Activated CD4-positive, alpha-beta T cell treated with anti-CD3 and anti-CD28 coated beads, Interleukin-2, amount 10 ng/mL, durations not matched to agents 24 days and 14 days (primary cell): ENCODE measurements at regions of chr2 and their contacts with region 1.

Region 1: GRCh38 chr2:179751163-179751809 is 110.1 kb downstream of the ZNF385B start:
- DNase-seq: no peak
- H3K4me3 Mint-ChIP-seq: no peak overlapping the region
- H3K27ac Mint-ChIP-seq: no peak overlapping the region
- H3K4me1 Mint-ChIP-seq: no peaks in the 10 kb centered on the region
- H3K27me3 Mint-ChIP-seq: peaks cover 8% of the 10 kb centered on the region

Region 2: DNA sequence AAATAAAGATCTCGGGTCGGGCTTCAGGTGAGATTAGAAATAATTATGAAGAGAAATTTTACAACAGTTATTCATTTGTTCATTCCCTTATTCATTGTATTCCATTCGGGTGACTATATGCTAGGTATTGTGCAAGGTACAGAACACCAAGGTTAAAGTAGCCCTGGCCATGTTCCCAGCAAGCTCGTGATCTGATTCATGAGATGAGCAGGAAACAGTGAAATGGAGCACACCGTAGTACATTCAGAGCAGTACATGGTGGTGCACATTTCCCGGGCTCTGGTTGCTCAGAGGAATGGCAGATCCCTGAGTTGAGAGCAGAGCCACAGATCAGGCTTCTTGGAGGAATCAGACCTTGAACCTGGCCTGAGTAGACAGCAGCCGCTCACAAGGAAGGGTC is 1388.0 kb before region 1 on chr2:
- intact Hi-C with region 1: no loop called
- DNase-seq: no peak
- H3K4me3 Mint-ChIP-seq: no peak overlapping the region
- H3K27ac Mint-ChIP-seq: no peak overlapping the region
- H3K4me1 Mint-ChIP-seq: no peaks in the 10 kb centered on the region
- H3K27me3 Mint-ChIP-seq: peaks cover 10% of the 10 kb centered on the region

Region 3: GRCh38 chr2:179354739-179355537 is 396.3 kb before region 1 on chr2:
- intact Hi-C with region 1: no loop called
- DNase-seq: no peak
- H3K4me3 Mint-ChIP-seq: no peak overlapping the region
- H3K27ac Mint-ChIP-seq: no peak overlapping the region
- H3K4me1 Mint-ChIP-seq: no peaks in the 10 kb centered on the region
- H3K27me3 Mint-ChIP-seq: peaks cover 4% of the 10 kb centered on the region

Region 4: DNA sequence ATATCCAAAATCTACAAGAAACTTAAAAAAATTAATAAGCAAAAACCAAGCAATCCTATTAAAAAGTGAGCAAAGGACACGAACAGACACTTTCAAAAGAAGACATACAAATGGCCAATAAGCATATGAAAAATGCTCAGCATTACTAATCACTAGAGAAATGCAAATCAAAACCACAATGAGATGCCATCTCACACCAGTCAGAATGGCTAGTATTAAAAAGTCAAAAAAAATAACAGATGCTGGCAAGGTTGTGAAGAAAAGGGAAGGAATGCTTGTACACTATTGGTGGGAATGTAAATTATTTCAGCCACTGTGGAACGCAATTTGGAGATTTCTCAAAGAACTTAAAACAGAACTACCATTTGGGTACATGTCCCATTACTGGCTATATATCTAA is 357.8 kb before region 1 on chr2:
- intact Hi-C with region 1: no loop called
- DNase-seq: no peak
- H3K4me3 Mint-ChIP-seq: no peak overlapping the region
- H3K27ac Mint-ChIP-seq: no peak overlapping the region
- H3K4me1 Mint-ChIP-seq: no peaks in the 10 kb centered on the region
- H3K27me3 Mint-ChIP-seq: no peaks in the 10 kb centered on the region

Region 5: GRCh38 chr2:179410552-179411356 is 340.5 kb before region 1 on chr2:
- intact Hi-C with region 1: loop called (anchors 2 kb)
- DNase-seq: peak; percentile 74
- H3K4me3 Mint-ChIP-seq: no peak overlapping the region
- H3K27ac Mint-ChIP-seq: no peak overlapping the region
- H3K4me1 Mint-ChIP-seq: peaks cover 5% of the 10 kb centered on the region
- H3K27me3 Mint-ChIP-seq: peaks cover 20% of the 10 kb centered on the region

Region 6: GRCh38 chr2:179422037-179422643 is 329.1 kb before region 1 on chr2:
- intact Hi-C with region 1: loop called (anchors 5 kb)
- DNase-seq: peak; percentile 78
- H3K4me3 Mint-ChIP-seq: no peak overlapping the region
- H3K27ac Mint-ChIP-seq: no peak overlapping the region
- H3K4me1 Mint-ChIP-seq: no peaks in the 10 kb centered on the region
- H3K27me3 Mint-ChIP-seq: peaks cover 35% of the 10 kb centered on the region